Caco-2 (cell line): ENCODE measurements at regions of chr11 and their contacts with region 1.

Region 1: GRCh38 chr11:28169816-28170215 is 61.6 kb downstream of the METTL15 start:
- DNase-seq: no peak
- H3K4me3 ChIP-seq: no peak overlapping the region
- H3K4me3 Mint-ChIP-seq: no peak overlapping the region
- H3K27ac Mint-ChIP-seq: no peak overlapping the region
- H3K4me1 ChIP-seq: peaks cover 13% of the 10 kb centered on the region
- H3K4me1 Mint-ChIP-seq: peaks cover 14% of the 10 kb centered on the region
- H3K27me3 ChIP-seq: no peaks in the 10 kb centered on the region
- H3K27me3 Mint-ChIP-seq: no peaks in the 10 kb centered on the region
- CTCF ChIP-seq: no peak

Region 2: DNA sequence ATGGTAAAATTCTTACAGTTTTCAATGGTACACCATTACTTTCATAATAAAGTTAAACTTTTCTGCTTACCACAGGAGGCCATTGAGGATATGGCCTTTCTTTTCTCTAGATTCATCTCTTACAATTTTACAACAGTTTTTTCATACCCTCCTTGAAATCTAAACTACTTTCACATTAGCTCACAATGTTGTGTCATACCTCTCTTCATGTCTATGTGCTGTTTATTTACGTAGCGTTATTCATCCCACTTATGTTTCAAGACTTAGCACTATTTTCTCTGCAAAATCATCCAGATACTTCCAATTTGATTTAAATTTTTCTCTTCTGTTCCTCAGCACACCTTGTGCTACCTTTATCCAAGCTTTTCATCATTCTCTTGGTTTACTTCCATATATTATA is 61.7 kb after region 1 on chr11:
- CTCF ChIA-PET with region 1: no interaction called
- POLR2A ChIA-PET with region 1: no interaction called
- intact Hi-C with region 1: loop called (anchors 5 kb)
- DNase-seq: no peak
- H3K4me3 ChIP-seq: no peak overlapping the region
- H3K4me3 Mint-ChIP-seq: no peak overlapping the region
- H3K27ac Mint-ChIP-seq: no peak overlapping the region
- H3K4me1 ChIP-seq: peaks cover 11% of the 10 kb centered on the region; the same call in 1 of the 2 replicates
- H3K4me1 Mint-ChIP-seq: peaks cover 8% of the 10 kb centered on the region
- H3K27me3 ChIP-seq: no peaks in the 10 kb centered on the region
- H3K27me3 Mint-ChIP-seq: no peaks in the 10 kb centered on the region
- CTCF ChIP-seq: no peak